Activated T-helper 2 cell treated with anti-CD3 and anti-CD28 coated beads, Interferon-gamma antibody, Interleukin-2, Interleukin-4, amounts not matched to agents 10 μg/mL and 5 μg/mL and 100 μg/mL, durations not matched to agents 14 hours and 24 hours and 36 hours (primary cell): ENCODE measurements at regions of chr11 and their contacts with region 1.

Region 1: GRCh38 chr11:85752890-85753581 is 57.9 kb downstream of the SYTL2 start:
- DNase-seq: peak; percentile 91
- H3K4me3 Mint-ChIP-seq: peak overlapping the region; percentile 57
- H3K27ac Mint-ChIP-seq: peak overlapping the region; percentile 95
- H3K4me1 Mint-ChIP-seq: peaks cover 89% of the 10 kb centered on the region
- H3K27me3 Mint-ChIP-seq: no peaks in the 10 kb centered on the region

Region 2: GRCh38 chr11:85664615-85665481 is 88.2 kb before region 1 on chr11 and contains the start of gene CREBZF:
- intact Hi-C with region 1: loop called (anchors 1 kb)
- DNase-seq: peak; percentile 94
- H3K4me3 Mint-ChIP-seq: peak within 1 kb of the TSS; percentile 99
- H3K27ac Mint-ChIP-seq: peak within 1 kb of the TSS; percentile 96
- H3K4me1 Mint-ChIP-seq: peaks cover 33% of the 10 kb centered on the region
- H3K27me3 Mint-ChIP-seq: no peaks in the 10 kb centered on the region
- total RNA-seq, gene CREBZF: 47.8 and 49.7 TPM in 2 replicates

Region 3: DNA sequence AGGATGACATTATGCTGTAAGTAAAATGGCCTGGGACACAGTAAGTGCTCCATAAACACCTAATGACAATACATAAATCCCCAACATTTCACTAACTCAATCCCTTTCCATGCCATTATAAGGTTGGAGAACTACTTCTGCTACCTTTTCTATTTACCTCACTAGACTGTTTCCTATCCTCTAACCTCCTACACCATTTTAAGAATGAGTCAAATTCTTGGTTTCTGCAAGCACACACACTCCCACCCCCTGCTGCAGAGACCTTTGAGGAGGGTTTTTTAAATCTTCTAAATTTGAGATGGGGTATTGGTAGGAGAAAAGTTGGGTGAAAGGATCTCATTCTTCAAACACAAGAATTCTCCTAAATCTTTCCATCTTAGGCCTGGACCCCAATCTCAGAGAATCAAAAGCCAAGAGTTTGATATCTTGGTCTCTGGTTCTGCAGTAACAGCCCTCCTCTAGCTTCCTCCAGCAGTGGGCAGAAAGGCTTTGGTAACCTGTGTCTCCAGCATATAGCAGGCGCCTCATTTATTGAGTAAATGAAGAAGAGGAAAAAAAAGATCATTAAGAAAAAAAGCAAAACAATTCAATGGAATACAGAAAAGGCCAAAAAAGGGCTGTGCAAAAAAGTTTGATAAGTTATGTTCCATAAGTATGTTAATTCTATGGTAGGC is 15.6 kb after region 1 on chr11:
- intact Hi-C with region 1: loop called (anchors 1 kb)
- DNase-seq: no peak
- H3K4me3 Mint-ChIP-seq: no peak overlapping the region
- H3K27ac Mint-ChIP-seq: peak overlapping the region; percentile 54
- H3K4me1 Mint-ChIP-seq: peaks cover 51% of the 10 kb centered on the region
- H3K27me3 Mint-ChIP-seq: no peaks in the 10 kb centered on the region

Region 4: DNA sequence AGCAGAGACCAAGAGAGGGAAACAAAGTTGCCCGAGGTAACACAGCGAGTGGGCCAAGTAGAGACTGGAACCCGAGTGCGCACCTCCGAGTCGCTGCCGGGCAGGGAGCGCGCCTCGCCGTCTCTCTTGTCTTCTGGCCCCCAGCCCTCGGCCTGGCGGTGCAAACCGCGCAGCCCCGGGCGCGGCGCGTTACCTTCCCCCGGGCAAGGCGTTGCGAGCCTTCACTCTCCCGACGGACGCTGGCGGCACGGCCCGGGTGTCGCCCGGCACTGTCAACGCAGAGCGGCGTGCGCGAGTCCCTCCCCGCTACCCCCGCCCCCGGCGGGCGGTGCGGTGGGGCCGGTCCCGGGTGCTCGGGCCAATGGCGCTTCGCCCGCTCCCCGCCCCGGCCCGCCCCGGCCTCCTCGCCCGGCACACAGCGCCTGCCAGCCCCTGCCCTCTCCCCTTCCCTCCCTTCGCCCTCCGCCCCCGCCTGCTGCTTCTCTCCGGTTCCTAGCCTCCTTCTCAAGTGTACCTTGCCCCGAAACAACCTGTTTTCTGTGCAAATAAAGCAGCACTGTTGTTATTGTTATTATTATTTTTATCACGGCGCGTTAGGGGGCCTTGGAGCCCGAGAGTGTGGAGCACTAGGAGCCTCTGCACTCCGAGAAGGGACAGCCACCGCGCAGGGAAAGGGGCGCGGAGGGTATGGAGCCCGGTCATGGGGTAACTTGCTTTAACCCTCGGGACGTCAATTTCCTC is 58.0 kb after region 1 on chr11 and contains the start of gene SYTL2:
- intact Hi-C with region 1: loop called (anchors 1 kb)
- DNase-seq: peak; percentile 74
- H3K4me3 Mint-ChIP-seq: peak within 1 kb of the TSS; percentile 82
- H3K27ac Mint-ChIP-seq: peak within 1 kb of the TSS; percentile 52
- H3K4me1 Mint-ChIP-seq: peaks cover 45% of the 10 kb centered on the region
- H3K27me3 Mint-ChIP-seq: peaks cover 3% of the 10 kb centered on the region
- total RNA-seq, gene SYTL2: 16.0 and 17.3 TPM in 2 replicates